Caki2 (cell line): ENCODE measurements at regions of chr1 and their contacts with region 1.

Region 1: DNA sequence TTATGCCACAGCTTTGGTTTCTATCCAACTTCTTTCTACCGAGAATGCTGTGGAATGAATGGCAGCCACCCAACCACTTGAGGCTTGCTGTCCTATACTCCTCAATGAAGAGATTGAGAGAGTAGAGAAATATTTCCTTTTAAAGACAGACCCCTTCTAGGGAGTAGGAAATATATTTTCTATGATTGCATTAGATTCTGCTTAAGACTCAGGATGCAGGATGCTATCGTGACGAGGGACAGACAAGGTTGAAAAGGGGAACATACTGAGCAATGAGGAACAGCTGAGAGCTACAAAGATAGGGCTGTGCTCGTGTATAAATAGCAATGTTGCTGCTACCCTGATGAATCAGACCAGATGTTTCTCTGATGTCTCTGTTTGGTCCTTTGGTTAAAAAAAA is 7.1 kb upstream of the RASAL2 start:
- DNase-seq: no peak

Region 2: GRCh38 chr1:178151831-178152230 is 65.1 kb after region 1 on chr1:
- in situ Hi-C with region 1: loop called (anchors 10 kb)
- DNase-seq: peak; percentile 14